ENCODE measurements at regions of chrX and their contacts with region 1.

Region 1: DNA sequence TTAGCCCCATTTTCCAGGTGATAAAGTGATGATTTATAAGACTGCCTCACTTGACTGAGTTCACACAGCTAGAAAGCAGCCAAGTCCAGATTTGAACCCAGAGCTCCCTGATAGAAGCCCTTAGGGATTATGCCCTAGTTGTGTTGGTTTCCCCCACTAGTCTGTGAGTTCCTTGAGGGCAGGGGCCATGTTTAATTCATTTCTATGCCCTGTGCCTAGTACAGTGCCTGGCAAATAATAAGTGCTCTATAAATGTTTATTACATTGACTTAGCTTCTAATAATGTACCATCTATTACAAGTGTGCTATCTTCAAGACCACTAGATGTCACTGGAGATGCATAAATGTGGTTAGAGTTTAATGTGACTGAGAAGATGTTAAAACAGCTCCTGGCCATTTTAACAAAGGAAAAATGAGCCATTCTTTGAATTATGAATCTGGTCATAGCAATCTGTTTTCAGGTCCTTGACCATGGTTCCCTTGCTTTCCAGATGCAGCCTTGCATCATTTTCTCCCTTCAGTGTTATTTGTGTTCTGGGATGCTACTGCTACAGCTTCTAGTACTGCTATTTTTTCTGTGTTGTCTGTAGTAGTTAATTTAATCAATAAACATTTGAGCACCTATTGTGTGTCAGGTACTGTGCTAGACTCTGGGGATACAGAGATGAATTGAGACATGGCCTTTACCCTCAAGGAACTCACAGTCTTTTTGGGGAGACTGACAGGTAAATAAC is 43.2 kb downstream of the SLC9A6 start:
- DNase-seq: no peak
- H3K4me3 Mint-ChIP-seq: no peak overlapping the region
- H3K27ac Mint-ChIP-seq: no peak overlapping the region
- H3K4me1 Mint-ChIP-seq: no peaks in the 10 kb centered on the region
- H3K27me3 Mint-ChIP-seq: no peaks in the 10 kb centered on the region

Region 2: DNA sequence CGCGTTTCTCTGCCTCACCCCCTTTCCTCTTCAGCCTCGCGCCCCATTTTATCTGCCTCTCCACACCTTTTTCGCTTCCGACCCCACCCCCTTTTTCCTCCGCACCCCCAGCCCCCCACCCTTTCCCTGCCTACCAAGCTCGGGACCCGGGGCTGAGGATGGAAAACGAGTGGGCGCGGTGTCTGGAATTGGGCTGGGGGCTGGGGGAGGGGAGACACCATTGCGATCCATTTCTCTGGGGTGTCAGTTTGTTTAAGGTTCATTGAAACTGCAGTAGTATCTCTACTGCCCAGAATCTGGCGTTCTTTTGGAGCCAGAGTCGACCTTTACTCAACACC is 42.5 kb before region 1 on chrX:
- intact Hi-C with region 1: no loop called
- DNase-seq: no peak
- H3K4me3 Mint-ChIP-seq: peak overlapping the region; percentile 92
- H3K27ac Mint-ChIP-seq: peak overlapping the region; percentile 55
- H3K4me1 Mint-ChIP-seq: peaks cover 52% of the 10 kb centered on the region
- H3K27me3 Mint-ChIP-seq: no peaks in the 10 kb centered on the region

Region 3: GRCh38 chrX:136015016-136015415 is 13.4 kb before region 1 on chrX:
- intact Hi-C with region 1: no loop called
- DNase-seq: no peak
- H3K4me3 Mint-ChIP-seq: no peak overlapping the region
- H3K27ac Mint-ChIP-seq: no peak overlapping the region
- H3K4me1 Mint-ChIP-seq: no peaks in the 10 kb centered on the region
- H3K27me3 Mint-ChIP-seq: no peaks in the 10 kb centered on the region

Region 4: DNA sequence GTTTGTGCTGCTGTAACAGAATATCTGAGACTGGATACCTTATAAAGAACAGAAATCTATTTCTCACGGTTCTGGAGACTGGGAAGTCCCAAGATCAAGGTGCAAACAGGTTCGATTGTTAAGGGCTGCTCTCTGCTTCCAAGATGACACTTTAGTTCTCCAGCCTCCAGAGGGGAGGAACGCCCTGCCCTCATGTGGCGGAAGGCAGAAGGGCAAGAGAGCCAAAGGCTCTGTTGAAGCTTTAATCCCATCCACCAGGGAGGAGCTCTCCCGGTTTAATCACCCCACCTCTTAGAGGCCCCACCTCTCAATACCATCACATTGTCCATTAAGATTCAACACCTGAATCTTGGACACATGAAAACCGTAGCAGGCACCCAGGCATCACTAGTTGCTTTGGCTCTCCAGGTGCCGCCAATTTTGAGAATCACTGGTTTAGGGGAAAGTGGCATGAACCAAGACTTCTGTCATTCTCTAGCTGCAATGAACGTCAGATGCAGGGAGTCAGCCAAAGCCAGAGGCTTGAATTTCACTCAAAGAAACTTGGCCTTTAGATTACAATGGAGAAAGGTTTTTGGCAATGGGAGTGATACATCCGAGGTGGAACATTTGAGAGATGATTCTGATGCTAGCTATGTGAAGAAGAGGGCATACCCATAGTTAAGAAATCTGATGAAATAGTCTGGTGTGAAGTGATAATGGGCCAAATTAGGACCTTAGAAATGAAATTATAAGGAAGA is 134.6 kb after region 1 on chrX:
- intact Hi-C with region 1: loop called (anchors 1 kb)
- DNase-seq: peak; percentile 12
- H3K4me3 Mint-ChIP-seq: no peak overlapping the region
- H3K27ac Mint-ChIP-seq: no peak overlapping the region
- H3K4me1 Mint-ChIP-seq: no peaks in the 10 kb centered on the region
- H3K27me3 Mint-ChIP-seq: no peaks in the 10 kb centered on the region

Region 5: DNA sequence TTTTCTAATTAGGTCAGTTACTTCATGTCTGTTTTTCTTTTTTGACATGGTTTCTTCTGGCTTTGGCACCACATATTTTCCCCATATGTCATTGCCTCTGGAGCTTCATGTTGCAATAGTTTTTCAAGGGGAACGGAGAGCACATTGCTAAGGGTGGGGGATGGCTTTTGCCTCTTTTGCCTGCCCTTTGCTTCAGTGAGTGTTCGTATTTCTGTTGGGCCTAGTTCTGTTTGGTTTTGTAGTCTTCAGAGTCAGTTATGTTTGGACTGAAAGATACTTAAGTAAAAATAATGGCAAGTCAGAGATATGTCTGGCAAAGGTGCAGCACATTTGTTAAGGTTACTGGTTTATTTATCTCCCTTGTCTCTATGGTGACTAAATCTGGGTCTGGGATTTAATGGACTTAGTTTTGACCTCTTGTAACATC is 148.0 kb after region 1 on chrX:
- intact Hi-C with region 1: no loop called
- DNase-seq: no peak
- H3K4me3 Mint-ChIP-seq: no peak overlapping the region
- H3K27ac Mint-ChIP-seq: no peak overlapping the region
- H3K4me1 Mint-ChIP-seq: no peaks in the 10 kb centered on the region
- H3K27me3 Mint-ChIP-seq: no peaks in the 10 kb centered on the region

Region 6: DNA sequence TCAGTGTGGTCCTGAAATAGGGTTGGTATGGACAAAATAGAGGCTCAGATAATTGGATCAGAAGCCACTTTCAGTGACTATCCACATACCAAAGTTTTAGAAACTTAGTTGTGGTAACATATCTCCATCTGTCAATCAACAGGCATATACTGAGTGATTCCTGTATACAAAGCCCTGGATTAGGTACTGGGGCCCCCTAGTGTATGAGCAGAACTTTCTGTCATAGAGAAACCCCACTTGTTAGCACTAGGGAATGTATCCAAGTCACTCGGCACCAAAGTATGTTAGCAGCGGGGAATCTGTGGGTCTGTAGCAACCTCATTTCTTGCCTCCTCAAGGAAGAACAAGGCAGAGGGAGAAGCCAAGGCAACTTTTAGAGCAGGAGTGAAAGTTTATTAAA is 172.0 kb after region 1 on chrX:
- intact Hi-C with region 1: loop called (anchors 2 kb)
- DNase-seq: no peak
- H3K4me3 Mint-ChIP-seq: no peak overlapping the region
- H3K27ac Mint-ChIP-seq: no peak overlapping the region
- H3K4me1 Mint-ChIP-seq: peaks cover 42% of the 10 kb centered on the region
- H3K27me3 Mint-ChIP-seq: no peaks in the 10 kb centered on the region

Region 7: GRCh38 chrX:136209016-136209738 is 180.8 kb after region 1 on chrX:
- intact Hi-C with region 1: loop called (anchors 1 kb)
- DNase-seq: no peak
- H3K4me3 Mint-ChIP-seq: no peak overlapping the region
- H3K27ac Mint-ChIP-seq: no peak overlapping the region
- H3K4me1 Mint-ChIP-seq: peaks cover 19% of the 10 kb centered on the region
- H3K27me3 Mint-ChIP-seq: no peaks in the 10 kb centered on the region

Region 8: GRCh38 chrX:136268051-136269048 is 239.9 kb after region 1 on chrX:
- intact Hi-C with region 1: loop called (anchors 1 kb)
- DNase-seq: peak; percentile 21
- H3K4me3 Mint-ChIP-seq: no peak overlapping the region
- H3K27ac Mint-ChIP-seq: no peak overlapping the region
- H3K4me1 Mint-ChIP-seq: peaks cover 4% of the 10 kb centered on the region
- H3K27me3 Mint-ChIP-seq: no peaks in the 10 kb centered on the region

Region 9: GRCh38 chrX:136577552-136577951 is 549.1 kb after region 1 on chrX:
- intact Hi-C with region 1: loop called (anchors 10 kb)
- DNase-seq: peak; percentile 63
- H3K4me3 Mint-ChIP-seq: peak overlapping the region; percentile 42
- H3K27ac Mint-ChIP-seq: peak overlapping the region; percentile 80
- H3K4me1 Mint-ChIP-seq: peaks cover 42% of the 10 kb centered on the region
- H3K27me3 Mint-ChIP-seq: no peaks in the 10 kb centered on the region

Measured in activated T-helper 1 cell treated with anti-CD3 and anti-CD28 coated beads, Interleukin-12 subunit alpha, Interleukin-12 subunit beta, Interleukin-2, Interleukin-4 antibody, amounts not matched to agents 30 ng/mL and 10 ng/mL and 1 ng/mL, durations not matched to agents 14 hours and 24 hours and 36 hours (primary cell).